Heart left ventricle (tissue), 16 donors: ENCODE measurements at regions of chr10 and their contacts with region 1.

Region 1: GRCh38 chr10:79286318-79286951 is 60.8 kb upstream of the PPIF start:
- DNase-seq: peak; percentile 64 to 91 (median 74)
- ATAC-seq: peak in 3 of 4 donors; percentile 41 to 65 (median 52)
- H3K4me3 ChIP-seq: peak overlapping the region in 1 of 12 donors; percentile 5
- H3K27ac ChIP-seq: peak overlapping the region in 11 of 12 donors; percentile 31 to 89 (median 49)
- H3K4me1 ChIP-seq: peaks cover 6 to 65% (median 38%) of the 10 kb centered on the region in 12 donors
- H3K27me3 ChIP-seq: no peaks in the 10 kb centered on the region
- CTCF ChIP-seq: no peak
- POLR2A ChIP-seq: no peak

Region 2: DNA sequence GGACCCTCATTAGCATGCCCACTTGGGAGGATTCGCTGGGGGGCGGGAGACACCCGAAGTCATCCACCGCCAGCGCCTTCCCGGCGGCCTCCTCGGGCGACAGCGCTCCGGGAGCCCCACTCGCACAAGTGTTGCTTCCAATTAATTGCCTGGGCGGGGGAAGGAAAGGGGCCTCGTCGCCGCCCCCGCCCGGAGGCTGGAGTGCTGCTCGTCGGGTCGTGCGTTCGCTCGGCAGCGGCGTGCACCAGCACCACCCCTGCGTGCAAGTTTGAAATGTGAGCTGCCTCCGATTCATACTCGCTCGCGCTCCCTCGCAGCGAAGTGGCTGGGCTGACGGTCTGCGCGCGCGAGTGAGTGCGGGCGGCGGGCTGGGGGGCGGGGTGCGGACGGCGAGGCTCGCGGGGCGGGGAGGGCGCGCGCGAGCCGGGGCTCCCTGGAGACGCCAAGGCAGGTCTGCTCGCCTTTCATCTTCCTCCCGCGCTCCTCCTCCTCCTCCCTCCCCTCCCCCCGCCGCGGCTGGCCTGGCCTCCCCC is 43.7 kb before region 1 on chr10:
- intact Hi-C with region 1: loop called in 1 of 10 experiments (anchors 5 kb)
- DNase-seq: peak; percentile 70 to 82 (median 75)
- ATAC-seq: peak in 3 of 4 donors; percentile 12 to 32 (median 14)
- H3K4me3 ChIP-seq: peak overlapping the region; percentile 26 to 74 (median 58)
- H3K27ac ChIP-seq: peak overlapping the region; percentile 3 to 93 (median 86)
- H3K4me1 ChIP-seq: peaks cover 44 to 97% (median 83%) of the 10 kb centered on the region in 12 donors
- H3K27me3 ChIP-seq: no peaks in the 10 kb centered on the region
- CTCF ChIP-seq: no peak
- POLR2A ChIP-seq: no peak

Region 3: DNA sequence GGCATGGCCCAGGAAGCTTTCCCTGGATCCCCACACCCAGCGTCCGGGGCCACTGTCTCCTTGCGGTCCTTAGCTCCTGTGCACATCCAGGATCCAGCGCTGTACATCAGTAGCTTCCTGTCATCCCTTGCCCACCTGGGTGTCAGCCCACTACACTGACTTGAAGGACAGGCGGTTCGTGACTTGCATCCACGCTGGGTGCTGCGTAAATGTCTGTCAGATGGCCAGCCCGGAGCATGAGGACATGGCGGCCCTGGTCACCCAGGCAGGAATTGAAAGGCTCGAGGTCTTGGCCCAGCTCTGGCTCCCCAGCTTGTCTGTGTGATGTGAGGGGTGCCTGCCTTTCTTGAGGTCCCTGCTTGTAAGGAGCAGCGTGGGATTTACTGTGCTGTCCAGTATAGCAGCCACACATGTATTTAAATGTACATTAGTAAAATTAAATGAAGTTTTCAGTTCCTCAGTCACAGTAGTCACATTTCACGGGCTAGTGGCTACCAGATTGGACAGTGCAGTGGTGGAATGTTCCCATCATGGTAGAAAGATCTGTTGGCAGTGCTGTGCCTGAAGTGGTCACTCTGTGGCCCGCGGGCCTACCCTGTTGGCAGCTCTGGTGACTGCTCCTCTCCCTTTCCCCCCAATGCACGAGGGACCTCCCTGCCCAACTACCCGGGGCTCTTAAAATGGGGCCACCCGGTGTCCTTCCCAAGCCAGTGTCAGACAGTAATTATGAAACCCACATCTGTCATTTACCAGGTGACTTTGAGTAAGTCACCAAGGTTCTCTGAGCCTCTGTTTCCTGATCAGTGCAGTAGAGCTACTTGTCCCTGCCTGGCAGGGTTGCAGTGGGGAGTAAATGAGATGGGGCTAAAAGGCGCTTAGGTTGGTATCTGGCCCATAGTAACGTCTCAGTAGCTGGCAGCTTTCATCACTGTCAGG is 37.0 kb before region 1 on chr10:
- intact Hi-C with region 1: loop called in 2 of 10 experiments (anchors 1 to 5 kb)
- DNase-seq: no peak
- ATAC-seq: no peak
- H3K4me3 ChIP-seq: no peak overlapping the region
- H3K27ac ChIP-seq: peak overlapping the region in 9 of 12 donors; percentile 78 to 93 (median 88)
- H3K4me1 ChIP-seq: peaks cover 23 to 96% (median 83%) of the 10 kb centered on the region in 12 donors
- H3K27me3 ChIP-seq: no peaks in the 10 kb centered on the region
- CTCF ChIP-seq: no peak
- POLR2A ChIP-seq: no peak